ENCODE measurements at regions of chr12 and their contacts with region 1.

Region 1: DNA sequence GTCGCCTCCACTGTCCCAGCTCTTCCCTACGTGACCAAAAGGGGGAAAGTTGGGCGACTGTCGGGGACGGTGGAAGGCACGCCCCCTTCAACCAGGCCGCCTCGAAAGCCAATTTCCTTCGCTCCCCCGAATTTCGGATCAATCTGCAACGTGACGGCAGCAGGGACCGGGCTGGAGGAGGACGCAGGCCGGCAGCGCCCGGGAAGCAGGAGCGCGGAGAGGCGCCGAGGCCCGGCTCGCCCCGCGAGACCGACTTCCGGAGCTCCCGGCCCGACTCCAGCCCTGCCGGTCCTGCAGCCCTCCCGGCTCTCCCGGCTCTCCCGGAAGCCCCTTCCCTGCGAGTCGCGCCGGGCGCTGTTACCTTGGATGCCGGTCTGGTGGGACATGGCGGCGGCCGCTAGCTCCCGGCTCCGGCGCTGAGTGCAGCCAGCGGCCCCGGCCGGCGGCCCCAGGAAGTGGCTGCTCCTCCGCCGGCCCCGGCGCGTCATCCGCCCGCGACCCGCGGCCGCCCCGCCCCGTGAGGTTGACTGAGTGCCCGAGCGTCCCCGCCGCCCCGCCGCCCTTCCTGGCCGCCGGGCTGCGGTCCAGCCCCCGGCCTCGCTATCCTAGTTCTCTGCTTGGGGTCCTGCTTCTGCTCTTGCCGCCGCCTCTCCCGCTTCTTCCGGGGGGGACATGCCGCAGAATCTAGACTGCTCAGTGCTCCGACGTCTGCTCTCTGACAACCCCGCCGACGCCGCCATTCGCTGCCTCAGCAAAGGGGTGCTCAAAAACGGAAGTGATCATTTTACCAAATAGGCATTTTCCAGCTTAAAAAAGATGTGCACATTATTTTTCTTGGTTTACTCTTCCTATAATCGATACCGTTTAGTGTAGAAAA is at the start of gene TWF1:
- DNase-seq: peak; percentile 69 to 80 (median 77)
- H3K4me3 ChIP-seq: peak within 1 kb of the TSS; percentile 73 to 91 (median 84)
- H3K4me3 Mint-ChIP-seq: peak within 1 kb of the TSS; percentile 99 to 100
- H3K27ac ChIP-seq: peak within 1 kb of the TSS; percentile 94 to 97
- H3K27ac Mint-ChIP-seq: peak within 1 kb of the TSS; percentile 99 to 100 (median 100)
- H3K4me1 ChIP-seq: peaks cover 19 to 38% of the 10 kb centered on the region in 2 donors
- H3K4me1 Mint-ChIP-seq: peaks cover 29% of the 10 kb centered on the region
- H3K27me3 ChIP-seq: peaks cover 4 to 6% of the 10 kb centered on the region in 2 donors
- H3K27me3 Mint-ChIP-seq: peaks cover 3 to 6% (median 4%) of the 10 kb centered on the region in 3 donors
- CTCF ChIP-seq: peak; percentile 49
- polyA plus RNA-seq, gene TWF1: 9.9 to 20.7 (median 13.7) TPM

Region 2: DNA sequence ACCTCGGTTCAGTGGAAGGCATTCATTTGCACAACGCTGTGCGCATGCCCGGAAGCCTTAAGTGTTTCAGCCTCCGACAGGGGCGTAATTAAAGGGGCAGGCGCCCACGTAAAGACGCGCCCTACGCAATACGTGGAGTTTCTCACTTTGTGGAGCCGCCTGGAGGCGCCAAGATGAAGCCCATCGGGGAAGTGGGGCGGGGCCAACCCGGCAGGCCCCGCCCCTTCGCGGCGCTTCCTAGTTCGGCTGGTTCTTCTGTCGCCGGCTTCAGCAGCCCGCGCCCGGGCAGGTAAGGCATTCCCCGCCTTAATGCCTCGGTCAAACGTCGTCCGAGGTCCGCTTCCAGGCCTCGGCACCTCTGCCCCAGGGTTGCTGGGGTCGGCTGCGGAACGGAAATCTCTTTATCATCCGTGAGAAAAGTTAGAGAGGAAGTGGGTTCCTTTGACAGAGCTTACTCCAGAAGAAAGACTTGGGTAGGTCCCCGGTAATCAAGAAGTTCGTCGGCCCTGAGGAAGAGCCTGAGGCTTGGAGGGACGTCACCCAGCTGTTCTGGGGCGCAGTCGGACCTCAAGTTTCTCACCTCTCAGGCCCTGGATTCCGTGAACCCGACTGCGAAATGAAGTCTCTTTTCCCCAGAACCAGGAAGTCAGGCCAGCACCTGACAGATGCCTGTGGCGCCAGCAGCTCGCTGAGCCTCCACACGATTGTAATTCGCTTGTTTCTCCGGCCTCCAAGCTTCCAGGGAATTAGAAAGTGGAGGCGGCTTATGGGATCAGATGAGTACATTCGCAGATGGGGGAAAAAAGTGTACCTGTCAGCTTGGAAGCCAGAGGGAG is 47.2 kb before region 1 on chr12 and contains the starts of genes IRAK4 and PUS7L:
- intact Hi-C with region 1: loop called (anchors 2 to 5 kb)
- DNase-seq: peak; percentile 96 to 99 (median 96)
- H3K4me3 ChIP-seq: peak within 1 kb of the TSS; percentile 65 to 89 (median 84)
- H3K4me3 Mint-ChIP-seq: peak within 1 kb of the TSS; percentile 93 to 97
- H3K27ac ChIP-seq: peak within 1 kb of the TSS; percentile 92 to 97
- H3K27ac Mint-ChIP-seq: peak within 1 kb of the TSS; percentile 97 to 99 (median 98)
- H3K4me1 ChIP-seq: peaks cover 32 to 46% of the 10 kb centered on the region in 2 donors
- H3K4me1 Mint-ChIP-seq: peaks cover 50% of the 10 kb centered on the region
- H3K27me3 ChIP-seq: no peaks in the 10 kb centered on the region
- H3K27me3 Mint-ChIP-seq: peaks cover 0 to 4% (median 0%) of the 10 kb centered on the region in 3 donors
- CTCF ChIP-seq: peak; percentile 35
- polyA plus RNA-seq, gene IRAK4: 17.3 to 44.6 (median 29.0) TPM
- polyA plus RNA-seq, gene PUS7L: 1.6 to 14.5 (median 13.0) TPM

Region 3: GRCh38 chr12:43789941-43790340 is 16.2 kb before region 1 on chr12:
- intact Hi-C with region 1: no loop called
- DNase-seq: no peak
- H3K4me3 ChIP-seq: no peak overlapping the region
- H3K4me3 Mint-ChIP-seq: no peak overlapping the region
- H3K27ac ChIP-seq: no peak overlapping the region
- H3K27ac Mint-ChIP-seq: no peak overlapping the region
- H3K4me1 ChIP-seq: no peaks in the 10 kb centered on the region
- H3K4me1 Mint-ChIP-seq: no peaks in the 10 kb centered on the region
- H3K27me3 ChIP-seq: no peaks in the 10 kb centered on the region
- H3K27me3 Mint-ChIP-seq: no peaks in the 10 kb centered on the region
- CTCF ChIP-seq: no peak

Measured in CD14-positive monocyte (primary cell).